ENCODE measurements at regions of chr1 and their contacts with region 1.

Region 1: GRCh38 chr1:183023601-183024316 is 539 bp downstream of the LAMC1 start:
- DNase-seq: peak; percentile 60 to 80 (median 66)
- ATAC-seq: peak; percentile 14 to 60 (median 44)
- H3K4me3 ChIP-seq: peak overlapping the region; percentile 42 to 95 (median 84)
- H3K27ac ChIP-seq: peak overlapping the region; percentile 99 to 100 (median 100)
- H3K4me1 ChIP-seq: peaks cover 0 to 58% (median 37%) of the 10 kb centered on the region in 12 donors
- H3K27me3 ChIP-seq: peaks cover 0 to 4% (median 0%) of the 10 kb centered on the region in 9 donors
- CTCF ChIP-seq: peak; percentile 20 to 63 (median 48)
- POLR2A ChIP-seq: no peak

Region 2: GRCh38 chr1:183039985-183040447 is 16.3 kb after region 1 on chr1:
- intact Hi-C with region 1: no loop called
- DNase-seq: no peak
- ATAC-seq: peak in 3 of 4 donors; percentile 49 to 67 (median 50)
- H3K4me3 ChIP-seq: no peak overlapping the region
- H3K27ac ChIP-seq: peak overlapping the region; percentile 18 to 69 (median 54)
- H3K4me1 ChIP-seq: peaks cover 8 to 88% (median 60%) of the 10 kb centered on the region in 12 donors
- H3K27me3 ChIP-seq: no peaks in the 10 kb centered on the region
- CTCF ChIP-seq: no peak
- POLR2A ChIP-seq: no peak

Region 3: GRCh38 chr1:183070923-183071618 is 47.3 kb after region 1 on chr1:
- intact Hi-C with region 1: loop called in 2 of 10 experiments (anchors 5 kb)
- DNase-seq: no peak
- ATAC-seq: peak in 2 of 4 donors; percentile 59 to 69
- H3K4me3 ChIP-seq: no peak overlapping the region
- H3K27ac ChIP-seq: peak overlapping the region in 9 of 12 donors; percentile 6 to 55 (median 26)
- H3K4me1 ChIP-seq: peaks cover 14 to 78% (median 62%) of the 10 kb centered on the region in 12 donors
- H3K27me3 ChIP-seq: no peaks in the 10 kb centered on the region
- CTCF ChIP-seq: no peak
- POLR2A ChIP-seq: no peak

Region 4: DNA sequence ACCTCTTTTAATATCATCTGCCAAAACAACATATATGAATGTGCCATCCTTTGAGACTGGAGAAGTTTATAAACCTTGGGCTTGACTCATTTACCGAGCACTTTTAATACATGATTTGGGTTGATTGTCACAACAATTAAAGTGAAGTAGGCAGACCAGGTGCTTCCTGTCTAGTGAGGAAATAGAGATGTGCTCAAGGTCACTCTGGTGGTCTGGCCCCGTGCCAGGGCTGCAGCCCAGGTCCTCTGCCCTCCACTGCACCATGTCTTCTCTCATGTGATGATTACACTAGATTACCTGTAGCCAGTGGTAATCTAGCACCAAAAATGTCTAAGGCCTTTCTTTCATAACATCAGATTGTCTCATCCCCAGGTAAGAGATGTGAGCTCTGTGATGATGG is 100.5 kb after region 1 on chr1:
- intact Hi-C with region 1: loop called in 1 of 10 experiments (anchors 5 kb)
- DNase-seq: no peak
- ATAC-seq: peak in 1 of 4 donors; percentile 27
- H3K4me3 ChIP-seq: no peak overlapping the region
- H3K27ac ChIP-seq: peak overlapping the region in 2 of 12 donors; percentile 4 to 15
- H3K4me1 ChIP-seq: peaks cover 0 to 15% (median 0%) of the 10 kb centered on the region in 12 donors
- H3K27me3 ChIP-seq: no peaks in the 10 kb centered on the region
- CTCF ChIP-seq: no peak
- POLR2A ChIP-seq: no peak

Region 5: GRCh38 chr1:183227963-183228649 is 204.3 kb after region 1 on chr1:
- intact Hi-C with region 1: loop called in 5 of 10 experiments (anchors 5 to 10 kb)
- DNase-seq: peak in 4 of 5 donors; percentile 42 to 55 (median 51)
- ATAC-seq: peak; percentile 20 to 76 (median 66)
- H3K4me3 ChIP-seq: no peak overlapping the region
- H3K27ac ChIP-seq: no peak overlapping the region
- H3K4me1 ChIP-seq: peaks cover 0 to 5% (median 0%) of the 10 kb centered on the region in 12 donors
- H3K27me3 ChIP-seq: no peaks in the 10 kb centered on the region
- CTCF ChIP-seq: peak; percentile 69 to 81 (median 76)
- POLR2A ChIP-seq: no peak

Region 6: DNA sequence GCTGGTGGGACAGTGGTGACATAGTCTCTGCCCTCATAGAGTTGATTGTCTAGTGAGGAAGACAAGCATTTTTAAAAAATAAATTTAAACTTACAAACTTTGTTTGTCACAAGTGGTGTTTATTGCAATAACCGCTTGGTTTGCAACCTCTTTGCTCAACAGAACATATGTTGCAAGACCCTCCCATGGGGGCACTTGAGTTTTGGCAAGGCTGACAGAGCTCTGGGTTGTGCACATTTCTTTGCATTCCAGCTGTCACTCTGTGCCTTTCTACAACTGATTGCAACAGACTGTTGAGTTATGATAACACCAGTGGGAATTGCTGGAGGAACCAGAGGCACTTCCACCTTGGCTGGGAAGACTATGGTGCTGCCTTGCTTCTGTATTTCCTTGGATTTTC is 220.7 kb after region 1 on chr1:
- intact Hi-C with region 1: loop called in 3 of 10 experiments (anchors 5 to 10 kb)
- DNase-seq: peak; percentile 49 to 89 (median 84)
- ATAC-seq: peak; percentile 22 to 64 (median 46)
- H3K4me3 ChIP-seq: no peak overlapping the region
- H3K27ac ChIP-seq: peak overlapping the region; percentile 26 to 88 (median 70)
- H3K4me1 ChIP-seq: peaks cover 0 to 60% (median 13%) of the 10 kb centered on the region in 12 donors
- H3K27me3 ChIP-seq: no peaks in the 10 kb centered on the region
- CTCF ChIP-seq: no peak
- POLR2A ChIP-seq: no peak

Region 7: DNA sequence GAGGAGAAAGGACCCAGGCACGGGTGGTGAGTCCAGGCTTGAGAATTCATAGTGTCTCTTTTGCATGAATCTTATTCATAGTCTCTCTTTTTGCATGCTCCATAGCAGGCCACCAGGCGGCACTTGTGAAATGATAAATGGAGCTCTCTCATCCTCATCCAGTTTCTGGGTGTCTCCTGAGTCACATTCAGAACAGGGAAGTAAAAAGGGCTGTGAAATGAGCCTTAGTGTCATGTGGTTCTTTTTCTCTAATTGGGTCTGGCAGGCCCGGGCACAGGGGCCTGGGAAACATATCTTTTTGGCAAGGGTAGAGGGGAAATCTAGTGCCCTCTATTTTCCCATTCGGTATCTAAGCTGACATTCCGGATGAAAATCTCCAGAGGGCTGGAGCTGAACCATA is 585.6 kb after region 1 on chr1:
- intact Hi-C with region 1: no loop called
- DNase-seq: peak; percentile 58 to 76 (median 67)
- ATAC-seq: peak; percentile 72 to 91 (median 89)
- H3K4me3 ChIP-seq: peak overlapping the region in 2 of 12 donors; percentile 5 to 11
- H3K27ac ChIP-seq: peak overlapping the region in 11 of 12 donors; percentile 55 to 78 (median 60)
- H3K4me1 ChIP-seq: peaks cover 0 to 57% (median 21%) of the 10 kb centered on the region in 12 donors
- H3K27me3 ChIP-seq: no peaks in the 10 kb centered on the region
- CTCF ChIP-seq: peak; percentile 22 to 70 (median 57)
- POLR2A ChIP-seq: no peak